ENCODE measurements at regions of chr20 and their contacts with region 1.

Region 1: DNA sequence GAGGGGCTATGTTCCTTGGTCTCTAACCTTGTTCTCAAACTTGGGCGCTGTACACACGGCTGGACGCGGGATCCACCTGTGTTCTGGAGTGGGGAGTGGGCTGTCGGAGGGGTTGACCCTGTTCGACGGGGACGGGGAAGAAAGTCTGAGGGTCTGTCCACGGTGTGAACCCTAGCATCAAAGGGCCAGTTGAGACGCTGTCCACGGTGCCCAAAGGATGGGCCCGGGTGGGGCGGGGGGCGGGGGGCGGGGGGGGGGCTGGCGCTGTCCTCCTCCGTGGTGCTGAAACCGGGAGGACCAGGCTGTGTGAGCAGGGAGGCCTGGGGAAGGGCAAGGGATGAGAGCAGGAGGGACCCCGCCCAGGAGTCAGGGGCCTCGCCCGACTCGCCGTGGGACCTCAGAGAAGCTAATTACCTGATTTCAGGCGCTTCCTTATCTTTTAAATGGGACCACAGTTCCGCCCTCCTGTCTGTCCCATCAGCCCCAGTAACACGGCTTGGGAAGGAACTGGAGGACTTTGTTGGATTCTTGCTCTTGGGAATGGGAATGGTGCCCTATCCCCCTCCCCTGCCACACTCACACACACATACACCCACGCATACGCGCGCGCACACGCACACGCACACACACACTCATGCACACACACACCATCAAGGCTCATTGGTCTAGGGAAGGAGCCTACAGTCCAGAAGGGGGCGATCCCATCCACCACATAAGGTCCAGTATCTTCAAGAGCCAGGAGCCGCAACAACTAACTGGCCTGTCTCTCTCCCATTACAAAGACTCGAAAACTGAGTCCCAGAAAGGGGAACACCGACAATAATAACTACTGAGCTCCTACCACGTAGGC is 1.0 kb upstream of the VSTM2L start:
- DNase-seq: peak; percentile 60
- ATAC-seq: peak; percentile 46
- H3K4me3 ChIP-seq: no peak overlapping the region
- H3K27ac ChIP-seq: no peak overlapping the region
- H3K4me1 ChIP-seq: no peaks in the 10 kb centered on the region; the same call in 1 of the 2 replicates
- H3K27me3 ChIP-seq: peaks cover 75% of the 10 kb centered on the region
- CTCF ChIP-seq: peak; percentile 42
- POLR2A ChIP-seq: no peak
- RAD21 ChIP-seq: peak; percentile 50; the same call in 1 of the 2 replicates

Region 2: DNA sequence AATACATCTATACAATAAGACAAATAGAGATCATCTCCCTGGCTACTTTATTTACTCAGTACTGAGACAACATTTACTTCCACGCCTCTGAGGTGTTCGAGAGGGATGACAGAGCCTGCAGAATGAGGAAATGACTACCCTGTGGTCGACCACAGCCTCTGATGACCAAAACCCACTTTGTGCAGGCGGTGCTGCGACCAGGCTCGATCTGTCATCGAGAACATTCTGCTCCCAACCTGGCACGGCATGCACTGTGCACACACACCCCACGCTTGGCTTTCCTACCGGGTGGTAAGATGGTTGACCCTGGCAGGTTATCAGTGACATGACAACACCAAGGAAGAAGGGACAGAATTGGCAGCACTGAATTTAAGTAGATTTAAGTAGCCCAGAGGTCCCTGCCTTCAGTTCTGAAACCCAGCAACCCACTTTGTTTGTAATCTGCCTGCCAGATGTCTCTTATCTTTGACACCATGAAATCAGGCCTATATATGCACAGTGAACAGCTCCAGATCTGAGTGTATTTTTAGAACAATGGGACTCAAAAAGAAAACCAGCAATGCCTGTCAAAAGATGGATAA is 88.8 kb after region 1 on chr20:
- CTCF ChIA-PET with region 1: no interaction called
- POLR2A ChIA-PET with region 1: no interaction called
- dilution Hi-C with region 1: no loop called
- in situ Hi-C with region 1: no loop called
- intact Hi-C with region 1: loop called (anchors 2 kb)
- DNase-seq: peak; percentile 78
- ATAC-seq: peak; percentile 36
- H3K4me3 ChIP-seq: no peak overlapping the region
- H3K27ac ChIP-seq: peak overlapping the region; percentile 12; the same call in 1 of the 2 replicates
- H3K4me1 ChIP-seq: peaks cover 29% of the 10 kb centered on the region
- H3K27me3 ChIP-seq: no peaks in the 10 kb centered on the region
- CTCF ChIP-seq: no peak
- POLR2A ChIP-seq: no peak
- RAD21 ChIP-seq: no peak

Region 3: DNA sequence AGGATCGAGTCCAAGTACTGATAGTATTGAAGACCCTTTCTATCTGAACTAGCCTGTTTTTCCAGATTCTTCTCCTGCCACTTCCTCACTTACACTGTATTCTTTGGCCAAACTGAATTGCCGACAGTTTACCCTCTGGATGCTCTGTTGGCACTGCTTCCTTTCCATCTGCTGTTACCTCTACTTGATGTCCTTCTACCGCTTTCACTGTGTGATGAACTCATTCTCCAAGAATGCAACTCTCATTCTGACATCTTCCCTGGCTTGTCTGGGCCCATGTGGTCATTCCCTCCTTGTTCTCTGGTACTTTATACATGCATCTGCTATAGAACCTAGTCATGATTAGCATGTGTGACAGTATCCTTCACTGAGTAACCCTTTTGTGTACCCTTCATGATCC is 147.9 kb after region 1 on chr20:
- CTCF ChIA-PET with region 1: no interaction called
- POLR2A ChIA-PET with region 1: no interaction called
- dilution Hi-C with region 1: no loop called
- in situ Hi-C with region 1: no loop called
- intact Hi-C with region 1: loop called (anchors 5 kb)
- DNase-seq: peak; percentile 89
- ATAC-seq: peak; percentile 79
- H3K4me3 ChIP-seq: no peak overlapping the region
- H3K27ac ChIP-seq: no peak overlapping the region
- H3K4me1 ChIP-seq: peaks cover 2% of the 10 kb centered on the region
- H3K27me3 ChIP-seq: no peaks in the 10 kb centered on the region
- CTCF ChIP-seq: no peak
- POLR2A ChIP-seq: no peak
- RAD21 ChIP-seq: no peak

Region 4: DNA sequence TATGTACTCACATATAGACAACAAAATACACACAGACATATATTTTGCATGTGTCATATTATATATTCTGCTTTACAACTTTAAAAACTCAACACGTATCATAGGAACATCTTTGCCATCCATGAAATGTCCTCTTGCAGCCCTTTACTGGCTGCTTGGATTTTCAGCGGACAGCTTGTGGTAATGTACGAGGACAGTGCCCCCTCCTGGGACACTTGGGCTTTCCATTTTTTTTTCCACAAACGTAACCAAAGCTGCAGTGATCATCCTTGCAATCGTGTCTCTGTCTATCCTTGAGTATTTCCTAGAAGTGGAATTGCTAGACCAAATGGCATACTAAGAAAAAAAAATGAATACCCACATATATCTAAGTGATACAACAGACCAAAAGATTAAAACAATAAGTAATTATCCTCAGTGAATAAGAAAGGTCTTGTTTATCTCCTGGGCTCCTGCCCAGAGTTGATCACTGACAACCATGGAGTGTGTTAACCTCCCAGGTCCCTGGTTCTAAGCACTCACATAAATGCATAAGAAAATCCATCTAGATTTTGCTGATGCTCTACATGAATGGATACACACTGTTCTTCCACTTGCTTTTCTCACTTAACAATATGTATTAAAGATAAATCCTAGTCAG is 420.2 kb after region 1 on chr20:
- CTCF ChIA-PET with region 1: no interaction called
- POLR2A ChIA-PET with region 1: no interaction called
- dilution Hi-C with region 1: no loop called
- in situ Hi-C with region 1: no loop called
- intact Hi-C with region 1: loop called (anchors 10 kb)
- DNase-seq: peak; percentile 73
- ATAC-seq: peak; percentile 84
- H3K4me3 ChIP-seq: no peak overlapping the region
- H3K27ac ChIP-seq: no peak overlapping the region
- H3K4me1 ChIP-seq: no peaks in the 10 kb centered on the region
- H3K27me3 ChIP-seq: peaks cover 38% of the 10 kb centered on the region
- CTCF ChIP-seq: peak; percentile 77
- POLR2A ChIP-seq: no peak
- RAD21 ChIP-seq: peak; percentile 87